ENCODE measurements at regions of chr13 and their contacts with region 1.

Region 1: GRCh38 chr13:75372517-75372916 is 109.5 kb downstream of the TBC1D4 start:
- DNase-seq: peak; percentile 60
- H3K4me3 ChIP-seq: no peak overlapping the region
- H3K27ac ChIP-seq: no peak overlapping the region
- H3K4me1 ChIP-seq: no peaks in the 10 kb centered on the region
- H3K27me3 ChIP-seq: no peaks in the 10 kb centered on the region
- CTCF ChIP-seq: peak; percentile 68

Region 2: DNA sequence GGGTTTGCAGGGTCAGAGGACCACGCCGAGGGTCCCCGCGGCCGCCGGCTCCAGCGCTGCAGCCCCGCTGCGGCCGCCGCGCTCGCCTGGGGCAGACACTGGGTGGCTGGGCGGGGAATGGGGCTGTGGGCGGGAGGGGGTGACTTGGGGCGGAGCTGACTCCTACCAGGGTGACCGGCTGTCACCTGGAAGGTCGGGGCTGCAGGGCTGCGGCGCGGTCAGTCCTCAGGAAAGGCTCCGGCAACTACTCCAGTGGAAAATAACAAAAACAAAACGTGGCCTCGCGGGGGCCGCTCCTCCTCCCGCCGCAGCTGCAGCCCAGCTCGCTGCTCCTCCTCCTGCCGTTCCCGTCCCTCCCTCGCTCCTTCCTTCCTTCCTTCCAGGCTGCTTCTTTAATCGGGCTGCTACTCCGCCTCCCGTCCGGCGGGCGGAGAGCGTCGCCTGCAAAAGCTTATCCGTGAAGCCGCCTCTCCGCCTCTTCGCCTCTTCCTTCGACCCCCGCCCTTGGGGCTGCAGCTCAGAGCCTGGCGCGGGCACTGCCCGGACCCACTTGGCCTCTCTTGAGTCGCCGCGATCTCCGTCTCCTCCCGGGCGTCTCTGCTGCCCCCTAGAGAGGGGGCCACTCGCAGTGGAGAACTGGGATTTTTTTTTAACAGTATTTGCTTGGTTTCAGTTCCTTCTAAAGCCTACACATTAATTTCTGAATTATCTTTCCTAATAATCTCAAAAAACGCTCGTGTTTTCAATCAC is 109.7 kb after region 1 on chr13 and contains the start of gene TBC1D4:
- CTCF ChIA-PET with region 1: no interaction called
- POLR2A ChIA-PET with region 1: no interaction called
- intact Hi-C with region 1: loop called (anchors 5 kb)
- DNase-seq: peak; percentile 91
- H3K4me3 ChIP-seq: peak within 1 kb of the TSS; percentile 83
- H3K27ac ChIP-seq: peak within 1 kb of the TSS; percentile 35
- H3K4me1 ChIP-seq: no peaks in the 10 kb centered on the region
- H3K27me3 ChIP-seq: peaks cover 32% of the 10 kb centered on the region
- CTCF ChIP-seq: peak; percentile 90
- total RNA-seq, gene TBC1D4: 9.8 and 10.6 TPM in 2 replicates